ENCODE measurements at regions of chr6 and their contacts with region 1.

Region 1: DNA sequence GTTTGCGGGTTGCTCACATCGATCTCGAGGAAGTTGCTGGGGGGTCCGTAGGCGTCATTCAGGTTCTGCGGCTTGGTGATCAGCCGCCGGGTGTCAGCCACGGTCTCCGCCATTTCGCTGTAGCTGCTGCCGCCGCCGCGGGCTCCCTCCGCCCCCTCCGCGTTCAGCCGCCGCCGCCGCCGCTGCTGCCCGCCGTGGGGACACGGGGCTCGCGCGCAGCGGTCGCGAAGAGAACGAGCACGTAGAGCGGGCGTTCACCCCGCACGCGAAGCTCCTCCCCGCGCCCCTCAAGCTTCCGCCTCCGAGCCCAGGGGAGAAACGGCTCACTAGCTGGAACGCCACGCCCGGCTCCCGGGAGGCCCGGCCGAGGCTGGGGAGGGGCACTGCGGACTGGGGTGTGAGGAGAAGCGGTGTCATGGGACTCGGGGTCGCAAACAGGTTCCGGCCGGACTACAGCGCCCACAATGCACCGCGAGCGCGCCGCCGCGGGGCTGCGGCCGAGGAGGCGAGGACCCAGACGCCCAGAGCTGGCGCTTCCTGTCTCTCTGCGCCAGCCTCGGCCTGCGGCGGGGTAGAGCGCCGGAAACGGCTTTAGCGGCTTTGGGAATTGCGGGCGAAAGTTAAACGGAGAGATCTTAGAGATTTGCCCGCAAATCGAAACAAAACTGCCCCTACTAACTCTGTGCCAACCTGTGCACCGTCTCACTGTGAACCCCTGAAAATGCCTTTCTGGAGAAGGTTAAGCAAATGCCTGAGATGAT is at the start of gene SNX3:
- DNase-seq: peak; percentile 98
- H3K4me3 ChIP-seq: peak within 1 kb of the TSS; percentile 81 to 95 (median 85)
- H3K27ac ChIP-seq: peak within 1 kb of the TSS; percentile 59
- H3K4me1 ChIP-seq: peaks cover 14% of the 10 kb centered on the region
- H3K27me3 ChIP-seq: no peaks in the 10 kb centered on the region
- CTCF ChIP-seq: peak in 1 of 2 donors; percentile 2
- POLR2A ChIP-seq: peak; percentile 63
- total RNA-seq, gene SNX3: 141 and 155 TPM in 2 replicates

Region 2: GRCh38 chr6:108294727-108295625 is 34.0 kb after region 1 on chr6 and contains the start of gene AFG1L:
- CTCF ChIA-PET with region 1: interaction called, 3 read pairs
- POLR2A ChIA-PET with region 1: interaction called, 7 read pairs
- dilution Hi-C with region 1: no loop called
- intact Hi-C with region 1: loop called (anchors 1 kb)
- DNase-seq: peak; percentile 90
- H3K4me3 ChIP-seq: peak within 1 kb of the TSS; percentile 51 to 72 (median 58)
- H3K27ac ChIP-seq: peak within 1 kb of the TSS; percentile 72
- H3K4me1 ChIP-seq: peaks cover 10% of the 10 kb centered on the region
- H3K27me3 ChIP-seq: no peaks in the 10 kb centered on the region
- CTCF ChIP-seq: no peak
- POLR2A ChIP-seq: peak; percentile 49
- total RNA-seq, gene AFG1L: 6.0 and 6.2 TPM in 2 replicates

Measured in endothelial cell of umbilical vein (primary cell).